Activated naive CD4-positive, alpha-beta T cell treated with anti-CD3 and anti-CD28 coated beads for 36 hours (primary cell): ENCODE measurements at regions of chr6 and their contacts with region 1.

Region 1: GRCh38 chr6:4281341-4282293 is 146.2 kb upstream of the ECI2 start:
- DNase-seq: peak; percentile 75
- H3K4me3 Mint-ChIP-seq: peak overlapping the region; percentile 52
- H3K27ac Mint-ChIP-seq: no peak overlapping the region
- H3K4me1 Mint-ChIP-seq: peaks cover 7% of the 10 kb centered on the region
- H3K27me3 Mint-ChIP-seq: peaks cover 38% of the 10 kb centered on the region

Region 2: DNA sequence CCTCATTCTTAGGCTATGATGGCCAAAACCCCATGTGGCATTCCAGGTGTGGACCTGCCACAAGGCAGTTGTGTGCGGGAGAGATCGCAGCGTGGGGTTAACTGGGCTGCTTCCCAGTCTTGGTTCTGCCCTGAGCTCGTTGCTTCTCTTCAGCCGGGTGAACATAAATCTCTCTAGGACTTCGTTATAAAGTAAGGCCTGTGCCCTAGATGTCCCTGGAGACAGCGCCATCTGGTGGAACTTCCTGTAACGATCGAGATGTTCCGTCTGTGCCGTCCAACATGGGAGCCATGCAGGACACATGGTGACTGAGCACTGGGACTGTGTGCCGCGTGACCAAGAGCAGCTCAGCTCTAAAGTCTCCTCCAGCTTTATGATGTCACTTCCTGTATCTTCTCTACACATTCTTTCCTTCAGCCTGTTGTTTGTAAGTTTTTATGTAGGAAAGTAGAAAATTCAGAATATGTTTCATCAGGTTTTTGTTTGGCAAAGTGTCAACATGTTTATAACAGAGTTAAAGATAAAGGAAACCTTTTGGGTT is 749.0 kb after region 1 on chr6:
- CTCF ChIA-PET with region 1: no interaction called
- intact Hi-C with region 1: loop called (anchors 10 kb)
- DNase-seq: peak; percentile 91
- H3K4me3 Mint-ChIP-seq: no peak overlapping the region
- H3K27ac Mint-ChIP-seq: no peak overlapping the region
- H3K4me1 Mint-ChIP-seq: peaks cover 14% of the 10 kb centered on the region
- H3K27me3 Mint-ChIP-seq: peaks cover 3% of the 10 kb centered on the region